Activated B cell treated with CpG ODN at 0.5 μM for 24 hours (primary cell): ENCODE measurements at regions of chr1 and their contacts with region 1.

Region 1: DNA sequence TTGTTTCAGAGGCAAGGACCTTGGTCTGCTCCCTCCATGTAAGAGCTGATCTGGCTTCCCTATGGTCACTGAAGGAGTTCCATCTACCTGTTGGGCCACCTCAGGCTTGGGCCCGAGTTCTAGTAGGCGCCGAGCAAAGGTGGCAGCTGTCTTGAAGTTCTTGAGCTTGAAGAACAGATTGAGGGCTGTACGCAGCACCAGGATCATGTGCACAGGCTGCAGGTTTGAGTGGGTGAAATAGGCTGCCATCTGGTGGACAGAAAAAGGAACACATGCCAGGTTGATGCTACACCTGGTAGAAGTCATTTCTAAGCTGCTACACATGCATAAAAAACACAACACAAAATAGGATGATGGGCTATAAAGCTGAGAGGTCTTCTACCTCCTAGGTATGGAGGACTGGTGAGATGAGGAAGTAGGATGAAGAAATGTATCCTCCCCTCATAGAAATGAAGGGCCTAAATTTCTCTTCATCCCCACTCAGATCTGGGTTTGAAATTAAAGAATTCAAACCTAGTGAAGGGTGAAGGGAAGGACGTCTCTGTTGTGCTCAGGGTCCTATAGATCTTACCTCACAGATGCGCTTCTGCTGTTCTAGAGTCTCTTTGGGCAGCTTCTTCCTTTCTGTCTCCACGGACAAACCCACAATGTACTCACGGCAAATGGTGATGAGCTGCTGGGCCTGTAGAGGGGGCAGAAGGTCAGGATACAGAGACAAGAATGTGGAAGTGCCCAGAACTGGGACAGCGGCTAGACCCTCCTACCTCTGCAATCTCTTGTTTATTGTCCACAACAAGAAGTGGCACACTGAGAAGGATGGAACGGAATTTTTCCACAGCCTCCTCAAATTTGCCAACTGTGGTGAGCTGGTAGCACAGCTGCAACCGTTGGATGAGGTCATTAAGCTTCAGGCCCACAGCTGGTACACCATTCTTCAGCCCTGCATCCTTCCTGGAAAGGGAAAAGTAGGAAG is 6.6 kb upstream of the PEX19 start:
- DNase-seq: peak; percentile 23
- ATAC-seq: peak; percentile 96
- H3K4me3 Mint-ChIP-seq: no peak overlapping the region
- H3K27ac Mint-ChIP-seq: no peak overlapping the region
- H3K4me1 Mint-ChIP-seq: peaks cover 4% of the 10 kb centered on the region
- H3K27me3 Mint-ChIP-seq: no peaks in the 10 kb centered on the region
- CTCF ChIP-seq: peak; percentile 70

Region 2: DNA sequence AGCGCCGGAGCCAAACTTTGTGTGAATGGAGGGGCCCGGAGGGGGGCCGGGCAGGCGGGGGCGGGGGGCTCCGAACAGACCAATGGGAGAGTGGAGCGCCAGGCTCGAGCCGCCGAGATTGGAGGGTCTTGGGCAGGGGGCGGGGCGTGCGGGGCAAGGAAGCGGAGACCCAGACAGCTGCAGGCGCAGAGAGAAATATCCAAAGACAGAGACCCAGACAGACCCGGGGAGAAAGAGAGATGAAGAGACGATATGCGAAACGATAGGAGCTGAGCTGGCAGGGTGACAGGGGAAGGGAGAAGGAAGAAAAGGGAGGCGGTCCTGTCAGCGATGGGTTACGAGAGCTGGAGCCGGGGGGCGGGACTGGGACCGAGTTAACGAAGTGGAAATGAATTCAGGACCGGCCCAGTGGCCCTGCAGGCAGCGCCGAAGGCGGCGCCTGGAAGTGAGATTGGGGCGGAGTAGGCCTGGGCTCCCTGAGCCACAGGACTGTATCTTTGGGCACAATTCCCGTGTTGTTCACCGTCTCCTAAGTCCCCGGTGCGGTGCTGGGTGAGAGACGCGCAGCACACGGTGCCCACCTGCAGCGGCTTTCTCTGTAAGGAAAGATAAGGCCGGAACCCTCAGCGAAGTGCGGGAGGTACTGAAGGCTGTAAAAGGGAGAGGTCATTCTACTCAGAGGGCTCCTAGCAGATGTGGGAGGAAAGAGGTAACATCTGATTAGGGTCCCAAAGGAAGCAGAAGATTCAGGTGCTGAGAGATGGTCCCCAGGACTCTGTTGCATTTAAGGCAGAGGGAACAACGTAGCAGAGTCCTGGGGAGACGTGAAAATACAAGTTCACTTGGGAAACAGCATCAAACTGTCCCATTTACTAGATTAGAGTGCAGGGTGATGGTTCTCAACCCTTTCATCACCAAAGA is 221.0 kb before region 1 on chr1:
- CTCF ChIA-PET with region 1: no interaction called
- POLR2A ChIA-PET with region 1: no interaction called
- intact Hi-C with region 1: no loop called
- DNase-seq: peak; percentile 62
- ATAC-seq: peak; percentile 99
- H3K4me3 Mint-ChIP-seq: peak overlapping the region; percentile 90
- H3K27ac Mint-ChIP-seq: no peak overlapping the region
- H3K4me1 Mint-ChIP-seq: peaks cover 7% of the 10 kb centered on the region
- H3K27me3 Mint-ChIP-seq: peaks cover 50% of the 10 kb centered on the region
- CTCF ChIP-seq: no peak

Region 3: GRCh38 chr1:160085686-160086455 is 205.7 kb before region 1 on chr1:
- CTCF ChIA-PET with region 1: interaction called, 21 read pairs
- POLR2A ChIA-PET with region 1: no interaction called
- intact Hi-C with region 1: no loop called
- DNase-seq: peak; percentile 60
- ATAC-seq: peak; percentile 68
- H3K4me3 Mint-ChIP-seq: no peak overlapping the region
- H3K27ac Mint-ChIP-seq: no peak overlapping the region
- H3K4me1 Mint-ChIP-seq: peaks cover 14% of the 10 kb centered on the region
- H3K27me3 Mint-ChIP-seq: peaks cover 16% of the 10 kb centered on the region
- CTCF ChIP-seq: no peak

Region 4: DNA sequence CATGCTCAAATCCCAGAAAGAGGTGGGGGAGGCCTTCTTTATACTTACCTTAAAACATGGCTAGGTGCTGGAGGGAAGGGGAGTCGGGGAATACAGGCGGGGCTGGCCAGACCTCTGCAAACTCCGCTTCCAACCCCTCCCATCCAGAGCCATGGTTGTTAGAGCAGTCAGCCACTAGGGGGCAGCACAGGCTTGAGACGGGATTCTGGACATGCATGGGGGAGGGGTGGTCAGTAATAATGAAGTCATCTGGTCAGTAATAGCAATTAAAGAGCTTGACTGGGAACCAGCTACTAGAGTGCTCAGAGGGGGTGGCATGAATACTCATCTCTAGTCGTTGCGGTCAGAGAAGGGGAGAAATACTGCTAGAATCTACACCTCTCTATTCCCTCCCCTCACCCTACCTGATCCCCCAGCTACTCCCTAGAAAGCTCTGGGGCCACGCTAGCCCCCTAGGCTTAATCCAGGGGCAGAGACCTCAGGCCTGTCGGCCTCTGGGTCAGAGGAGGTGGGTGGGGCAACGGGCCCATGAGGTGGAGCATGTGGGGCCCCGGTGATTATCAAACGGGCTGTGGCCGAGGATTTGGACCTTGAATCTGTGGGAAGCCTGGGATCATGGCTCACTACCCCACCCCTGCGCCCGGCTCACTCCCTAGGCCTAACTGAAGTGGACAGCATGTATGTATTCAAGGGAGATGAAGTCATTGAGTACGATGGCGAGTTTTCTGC is 98.3 kb before region 1 on chr1:
- CTCF ChIA-PET with region 1: interaction called, 80 read pairs
- POLR2A ChIA-PET with region 1: interaction called, 9 read pairs
- intact Hi-C with region 1: loop called (anchors 1 kb)
- DNase-seq: peak; percentile 72
- ATAC-seq: peak; percentile 95
- H3K4me3 Mint-ChIP-seq: no peak overlapping the region
- H3K27ac Mint-ChIP-seq: no peak overlapping the region
- H3K4me1 Mint-ChIP-seq: peaks cover 3% of the 10 kb centered on the region
- H3K27me3 Mint-ChIP-seq: no peaks in the 10 kb centered on the region
- CTCF ChIP-seq: peak; percentile 43

Region 5: GRCh38 chr1:160244209-160244608 is 47.3 kb before region 1 on chr1:
- CTCF ChIA-PET with region 1: interaction called, 10 read pairs
- POLR2A ChIA-PET with region 1: no interaction called
- intact Hi-C with region 1: no loop called
- DNase-seq: no peak
- ATAC-seq: no peak
- H3K4me3 Mint-ChIP-seq: no peak overlapping the region
- H3K27ac Mint-ChIP-seq: no peak overlapping the region
- H3K4me1 Mint-ChIP-seq: no peaks in the 10 kb centered on the region
- H3K27me3 Mint-ChIP-seq: no peaks in the 10 kb centered on the region
- CTCF ChIP-seq: no peak

Region 6: GRCh38 chr1:160261893-160262794 is 29.4 kb before region 1 on chr1 and contains the start of gene DCAF8:
- CTCF ChIA-PET with region 1: interaction called, 54 read pairs
- POLR2A ChIA-PET with region 1: interaction called, 8 read pairs
- intact Hi-C with region 1: loop called (anchors 1 kb)
- DNase-seq: peak; percentile 95
- ATAC-seq: peak; percentile 91
- H3K4me3 Mint-ChIP-seq: peak within 1 kb of the TSS; percentile 99
- H3K27ac Mint-ChIP-seq: peak within 1 kb of the TSS; percentile 98
- H3K4me1 Mint-ChIP-seq: peaks cover 47% of the 10 kb centered on the region
- H3K27me3 Mint-ChIP-seq: no peaks in the 10 kb centered on the region
- CTCF ChIP-seq: no peak
- total RNA-seq, gene DCAF8: 155 and 172 TPM in 2 replicates

Region 7: GRCh38 chr1:160307118-160307854 is 15.8 kb after region 1 on chr1:
- CTCF ChIA-PET with region 1: interaction called, 13 read pairs
- POLR2A ChIA-PET with region 1: no interaction called
- intact Hi-C with region 1: no loop called
- DNase-seq: peak; percentile 22
- ATAC-seq: peak; percentile 96
- H3K4me3 Mint-ChIP-seq: no peak overlapping the region
- H3K27ac Mint-ChIP-seq: peak overlapping the region; percentile 81
- H3K4me1 Mint-ChIP-seq: peaks cover 39% of the 10 kb centered on the region
- H3K27me3 Mint-ChIP-seq: no peaks in the 10 kb centered on the region
- CTCF ChIP-seq: no peak